CD8-positive, alpha-beta memory T cell (primary cell): ENCODE measurements at regions of chr1 and their contacts with region 1.

Region 1: DNA sequence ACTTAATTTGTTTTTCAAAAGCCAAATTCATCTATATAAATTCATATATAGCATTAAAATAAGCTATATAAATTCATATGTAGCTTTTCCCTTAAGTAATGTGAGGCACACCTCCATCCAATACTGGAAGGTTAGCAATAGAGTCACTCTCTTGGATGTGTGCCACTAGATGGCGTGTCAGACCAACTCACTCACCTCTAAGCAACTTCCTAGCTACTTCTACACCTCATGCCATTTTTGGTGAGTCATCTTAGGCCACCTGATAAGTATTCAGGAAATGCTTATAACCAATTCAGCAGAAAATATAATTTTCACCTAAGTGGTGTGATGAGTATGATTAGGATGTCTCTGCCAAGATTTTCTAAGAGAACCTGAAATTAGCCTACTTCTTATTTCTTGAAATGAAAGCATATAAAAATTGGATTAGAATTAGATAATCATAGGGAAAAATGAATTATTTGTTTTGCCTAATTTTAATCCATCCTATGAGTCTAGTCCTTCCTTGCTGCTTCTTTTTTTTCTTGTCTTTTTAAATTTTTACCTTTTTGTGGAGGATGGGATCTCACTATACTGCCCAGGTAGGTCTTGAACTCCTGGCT is 34.4 kb upstream of the TADA1 start:
- DNase-seq: peak; percentile 51 to 83 (median 66)
- H3K4me3 ChIP-seq: no peak overlapping the region
- H3K4me3 Mint-ChIP-seq: no peak overlapping the region
- H3K27ac ChIP-seq: no peak overlapping the region
- H3K27ac Mint-ChIP-seq: no peak overlapping the region
- H3K4me1 ChIP-seq: no peaks in the 10 kb centered on the region
- H3K4me1 Mint-ChIP-seq: peaks cover 3 to 9% (median 8%) of the 10 kb centered on the region in 3 donors
- H3K27me3 ChIP-seq: no peaks in the 10 kb centered on the region
- H3K27me3 Mint-ChIP-seq: peaks cover 1 to 19% of the 10 kb centered on the region in 2 donors

Region 2: DNA sequence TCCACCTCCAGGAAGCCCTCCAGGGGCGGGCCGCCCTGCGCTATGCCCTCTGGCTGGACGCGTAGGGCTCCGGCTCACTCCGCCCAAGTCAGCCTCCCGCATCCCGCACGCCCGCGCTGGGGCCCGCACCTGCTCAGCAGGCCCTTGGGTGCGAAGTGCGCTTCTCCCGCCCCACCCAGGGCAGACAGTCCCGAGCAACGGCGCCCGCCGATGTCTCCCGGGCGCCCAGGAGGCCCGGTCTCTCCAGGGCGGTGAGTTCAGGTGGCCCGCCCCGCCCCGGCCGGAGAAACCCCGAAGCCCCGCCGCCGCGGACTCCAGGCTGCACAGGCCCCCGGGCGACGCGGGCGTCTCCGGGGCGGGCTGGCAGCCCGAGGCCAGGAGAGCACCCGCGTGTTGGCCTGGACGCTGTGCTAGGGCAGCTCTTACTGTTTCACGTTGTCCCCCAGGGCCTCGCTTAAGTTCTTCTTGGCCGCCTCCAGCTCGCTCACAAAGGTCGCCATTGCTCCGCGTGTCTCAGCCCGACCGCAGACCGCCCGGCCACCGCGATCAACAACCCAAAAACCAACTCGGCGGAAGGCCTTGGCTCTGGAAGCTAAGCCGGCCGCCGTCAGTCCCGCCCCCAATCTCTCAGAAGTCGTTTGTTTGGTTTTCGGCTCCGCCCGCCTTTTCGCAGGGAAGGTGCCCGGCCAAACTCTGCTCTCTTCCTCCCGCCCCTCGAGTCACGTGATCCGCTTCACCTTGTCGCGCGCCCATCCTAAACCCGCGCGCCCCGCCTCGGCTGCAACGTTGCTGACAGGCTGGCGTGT is 34.6 kb before region 1 on chr1 and contains the start of gene TADA1:
- CTCF ChIA-PET with region 1: interaction called, 16 read pairs
- POLR2A ChIA-PET with region 1: no interaction called
- DNase-seq: peak; percentile 96 to 97 (median 96)
- H3K4me3 ChIP-seq: peak within 1 kb of the TSS; percentile 79
- H3K4me3 Mint-ChIP-seq: peak within 1 kb of the TSS; percentile 91 to 99 (median 97)
- H3K27ac ChIP-seq: peak within 1 kb of the TSS; percentile 81
- H3K27ac Mint-ChIP-seq: peak within 1 kb of the TSS; percentile 78 to 99 (median 97)
- H3K4me1 ChIP-seq: peaks cover 25% of the 10 kb centered on the region
- H3K4me1 Mint-ChIP-seq: peaks cover 43 to 58% (median 56%) of the 10 kb centered on the region in 3 donors
- H3K27me3 ChIP-seq: no peaks in the 10 kb centered on the region
- H3K27me3 Mint-ChIP-seq: peaks cover 0 to 5% of the 10 kb centered on the region in 2 donors
- total RNA-seq, gene TADA1: 18.5 to 18.6 TPM

Region 3: DNA sequence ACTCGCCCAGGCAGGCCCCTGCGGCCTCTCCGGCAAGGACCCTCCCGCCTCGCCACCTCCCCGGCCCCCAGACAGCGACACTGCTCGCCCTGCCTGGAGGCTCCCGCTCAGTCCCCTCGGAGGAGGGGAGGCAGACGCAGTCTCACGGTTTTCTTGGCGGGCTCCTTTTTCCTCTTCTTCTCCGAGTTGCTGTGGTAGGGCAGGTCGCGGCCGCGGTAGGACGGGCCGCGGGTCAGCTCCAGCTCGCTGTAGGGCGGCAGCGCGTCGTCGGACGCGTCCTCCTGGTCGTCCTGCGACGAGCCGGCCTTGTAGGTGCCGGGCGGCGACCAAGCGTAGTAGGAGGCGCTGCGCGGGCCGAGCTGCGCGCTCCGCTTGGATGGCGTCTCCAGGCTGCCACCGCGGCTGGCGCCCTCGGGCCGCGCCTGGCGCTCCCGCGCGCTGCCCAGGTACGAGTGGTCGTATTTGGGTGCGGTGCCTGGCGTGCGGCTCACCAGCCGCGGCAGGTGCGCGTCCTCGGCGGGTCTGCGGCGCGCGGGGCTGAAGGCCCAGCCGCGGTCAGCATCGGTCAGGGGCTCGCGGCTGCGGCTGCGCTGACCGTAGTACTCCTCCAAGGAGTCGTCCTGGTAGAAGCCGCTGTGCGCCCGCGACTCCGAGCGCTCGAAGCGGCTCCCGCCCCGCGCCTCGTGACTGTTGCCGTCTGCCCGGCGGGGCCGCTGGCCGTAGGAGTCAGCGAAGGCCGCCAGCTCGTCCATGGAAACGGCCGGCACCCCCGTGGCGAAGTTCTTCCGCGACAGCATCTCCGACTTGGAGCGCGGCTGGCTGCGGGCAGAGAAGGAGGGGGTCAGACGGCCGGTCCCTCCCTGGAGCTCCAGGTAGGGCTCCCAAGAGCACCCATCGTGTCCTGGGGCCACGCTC is 10.3 kb after region 1 on chr1:
- CTCF ChIA-PET with region 1: interaction called, 14 read pairs
- POLR2A ChIA-PET with region 1: no interaction called
- DNase-seq: no peak
- H3K4me3 ChIP-seq: no peak overlapping the region
- H3K4me3 Mint-ChIP-seq: peak overlapping the region in 1 of 7 donors; percentile 13
- H3K27ac ChIP-seq: no peak overlapping the region
- H3K27ac Mint-ChIP-seq: no peak overlapping the region
- H3K4me1 ChIP-seq: no peaks in the 10 kb centered on the region
- H3K4me1 Mint-ChIP-seq: peaks cover 0 to 5% (median 0%) of the 10 kb centered on the region in 3 donors
- H3K27me3 ChIP-seq: peaks cover 21% of the 10 kb centered on the region
- H3K27me3 Mint-ChIP-seq: peaks cover 35 to 57% of the 10 kb centered on the region in 2 donors

Region 4: GRCh38 chr1:167066333-167067122 is 156.0 kb after region 1 on chr1:
- CTCF ChIA-PET with region 1: interaction called, 454 read pairs
- POLR2A ChIA-PET with region 1: no interaction called
- DNase-seq: peak; percentile 66 to 81 (median 74)
- H3K4me3 ChIP-seq: no peak overlapping the region
- H3K4me3 Mint-ChIP-seq: peak overlapping the region in 2 of 7 donors; percentile 37 to 49
- H3K27ac ChIP-seq: no peak overlapping the region
- H3K27ac Mint-ChIP-seq: no peak overlapping the region
- H3K4me1 ChIP-seq: no peaks in the 10 kb centered on the region
- H3K4me1 Mint-ChIP-seq: peaks cover 0 to 5% (median 3%) of the 10 kb centered on the region in 3 donors
- H3K27me3 ChIP-seq: no peaks in the 10 kb centered on the region
- H3K27me3 Mint-ChIP-seq: peaks cover 0 to 4% of the 10 kb centered on the region in 2 donors

Region 5: DNA sequence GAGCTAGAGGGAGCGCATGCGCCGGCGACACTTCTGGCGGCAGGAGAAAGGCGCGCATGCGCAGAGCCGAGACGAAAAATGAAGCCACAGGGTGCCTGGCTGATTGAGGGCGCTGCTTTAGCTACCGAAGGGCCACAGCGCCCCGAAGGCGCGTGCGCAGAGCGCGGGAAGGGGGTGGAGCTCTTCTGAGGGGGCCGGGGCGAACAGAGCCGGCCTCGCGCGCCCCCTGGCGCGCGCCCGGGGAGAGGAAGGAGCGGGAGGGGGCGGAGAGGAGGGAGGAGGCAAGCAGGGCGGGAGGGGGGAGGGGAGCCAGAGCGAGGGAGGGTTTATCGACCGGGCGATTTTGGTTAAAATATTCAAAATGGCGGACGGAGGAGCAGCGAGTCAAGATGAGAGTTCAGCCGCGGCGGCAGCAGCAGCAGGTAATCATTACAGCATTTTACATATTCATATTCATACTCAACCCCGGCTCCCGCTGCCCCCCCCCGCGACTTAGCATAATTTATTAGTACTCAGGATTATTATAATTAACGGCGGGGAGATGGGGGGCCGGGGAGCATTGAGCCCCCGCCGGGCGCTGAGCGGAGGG is 310.1 kb after region 1 on chr1 and contains the start of gene POU2F1:
- CTCF ChIA-PET with region 1: interaction called, 11 read pairs
- POLR2A ChIA-PET with region 1: no interaction called
- DNase-seq: peak; percentile 96 to 100 (median 98)
- H3K4me3 ChIP-seq: peak within 1 kb of the TSS; percentile 100
- H3K4me3 Mint-ChIP-seq: peak within 1 kb of the TSS; percentile 91 to 98 (median 92)
- H3K27ac ChIP-seq: peak within 1 kb of the TSS; percentile 88
- H3K27ac Mint-ChIP-seq: peak within 1 kb of the TSS; percentile 82 to 97 (median 92)
- H3K4me1 ChIP-seq: peaks cover 28% of the 10 kb centered on the region
- H3K4me1 Mint-ChIP-seq: peaks cover 27 to 48% (median 43%) of the 10 kb centered on the region in 3 donors
- H3K27me3 ChIP-seq: no peaks in the 10 kb centered on the region
- H3K27me3 Mint-ChIP-seq: peaks cover 0 to 5% of the 10 kb centered on the region in 2 donors
- total RNA-seq, gene POU2F1: 12.3 to 13.5 TPM